Activated CD4-positive, alpha-beta memory T cell treated with anti-CD3 and anti-CD28 coated beads for 36 hours (primary cell): ENCODE measurements at regions of chrX and their contacts with region 1.

Region 1: DNA sequence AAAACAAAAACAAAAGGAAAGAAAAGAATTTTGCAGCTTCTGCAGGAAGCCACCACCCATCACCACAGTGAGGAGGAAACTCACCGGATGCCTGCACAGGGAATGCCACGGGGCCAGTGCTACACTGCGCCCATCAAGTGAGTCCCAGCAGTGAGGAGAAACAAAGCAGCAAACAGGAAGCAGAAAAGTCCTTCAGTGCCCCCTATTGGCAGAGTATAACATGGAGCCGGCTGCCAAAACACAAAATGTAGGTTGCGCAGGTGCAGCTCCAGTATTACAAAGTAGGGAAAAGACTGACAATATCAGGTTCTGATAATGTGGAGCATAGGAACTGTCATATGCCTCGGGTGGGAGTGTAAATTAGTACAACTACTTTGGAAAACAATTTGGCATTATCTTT is 23.3 kb upstream of the SCML2 start:
- DNase-seq: peak; percentile 30
- H3K4me3 Mint-ChIP-seq: no peak overlapping the region
- H3K27ac Mint-ChIP-seq: no peak overlapping the region
- H3K4me1 Mint-ChIP-seq: peaks cover 5% of the 10 kb centered on the region
- H3K27me3 Mint-ChIP-seq: peaks cover 2% of the 10 kb centered on the region

Region 2: GRCh38 chrX:17744896-17745523 is 632.8 kb before region 1 on chrX:
- CTCF ChIA-PET with region 1: interaction called, 4 read pairs
- POLR2A ChIA-PET with region 1: no interaction called
- intact Hi-C with region 1: loop called (anchors 10 kb)
- DNase-seq: no peak
- H3K4me3 Mint-ChIP-seq: no peak overlapping the region
- H3K27ac Mint-ChIP-seq: no peak overlapping the region
- H3K4me1 Mint-ChIP-seq: peaks cover 3% of the 10 kb centered on the region
- H3K27me3 Mint-ChIP-seq: peaks cover 4% of the 10 kb centered on the region

Region 3: DNA sequence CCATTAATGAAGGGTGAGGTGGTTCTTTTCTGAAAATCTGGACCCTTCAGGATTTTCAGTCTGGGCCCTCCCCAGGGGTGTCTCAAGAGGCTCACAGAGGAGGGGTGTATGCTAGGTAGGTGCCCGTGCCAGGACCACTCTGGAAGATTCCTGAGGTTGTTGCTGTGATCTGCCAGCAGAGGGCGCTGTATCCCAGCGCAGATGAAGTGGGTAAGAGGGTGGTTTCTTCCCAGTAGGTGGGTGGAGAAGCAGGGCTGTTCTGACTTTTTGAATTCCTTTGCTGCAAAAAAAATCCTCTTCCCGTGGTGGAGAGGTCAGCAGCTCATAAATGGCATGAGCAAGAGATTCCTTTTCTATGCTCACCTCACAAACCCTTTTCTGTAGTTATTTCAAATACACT is 589.4 kb before region 1 on chrX:
- CTCF ChIA-PET with region 1: interaction called, 5 read pairs
- POLR2A ChIA-PET with region 1: no interaction called
- intact Hi-C with region 1: loop called (anchors 2 kb)
- DNase-seq: peak; percentile 52
- H3K4me3 Mint-ChIP-seq: no peak overlapping the region
- H3K27ac Mint-ChIP-seq: no peak overlapping the region
- H3K4me1 Mint-ChIP-seq: no peaks in the 10 kb centered on the region
- H3K27me3 Mint-ChIP-seq: no peaks in the 10 kb centered on the region

Region 4: DNA sequence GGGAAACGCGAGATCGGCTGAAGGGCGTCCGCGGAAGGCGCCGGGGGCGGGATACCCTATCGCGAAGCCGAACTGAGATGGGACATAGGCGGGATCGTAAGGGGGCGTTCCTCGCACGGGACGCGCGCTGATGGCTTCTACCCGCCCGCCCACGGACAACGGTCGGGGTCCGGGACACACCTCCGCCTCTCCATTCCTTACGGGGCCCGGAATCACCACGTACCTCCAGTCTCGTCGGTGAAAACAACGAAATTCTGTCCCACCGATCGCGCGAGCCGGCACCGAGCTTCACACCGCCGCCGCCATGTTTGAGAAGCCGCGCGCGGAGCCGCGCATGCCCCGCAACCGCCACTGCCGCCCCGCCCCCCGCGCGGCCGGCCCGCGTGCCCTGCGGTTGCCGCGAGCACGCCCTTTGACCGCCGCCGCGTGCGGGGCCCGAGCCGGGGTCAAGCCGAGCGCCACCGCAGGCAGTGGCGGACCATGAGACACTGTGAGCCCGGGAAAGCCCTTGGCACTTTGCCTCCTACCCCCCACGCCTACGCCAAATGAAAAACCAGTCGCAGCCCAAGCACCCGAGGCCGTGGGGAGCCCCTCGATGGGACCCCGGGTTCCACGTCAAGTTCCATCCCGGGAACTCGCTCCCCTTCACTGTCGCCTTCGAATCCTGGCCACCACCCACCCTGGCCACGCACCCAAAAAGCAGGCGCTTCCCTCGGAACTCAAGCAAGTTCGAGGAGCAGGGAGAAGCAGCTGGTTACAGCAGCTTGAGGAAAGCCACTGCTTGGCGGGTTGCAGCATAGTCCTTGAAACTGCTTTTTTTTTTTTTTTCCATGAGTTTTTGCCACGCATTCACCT is 23.2 kb before region 1 on chrX and contains the start of gene SCML2:
- CTCF ChIA-PET with region 1: interaction called, 12 read pairs
- POLR2A ChIA-PET with region 1: interaction called, 7 read pairs
- intact Hi-C with region 1: no loop called
- DNase-seq: peak; percentile 40
- H3K4me3 Mint-ChIP-seq: peak within 1 kb of the TSS; percentile 71
- H3K27ac Mint-ChIP-seq: no peak within 1 kb of the TSS
- H3K4me1 Mint-ChIP-seq: peaks cover 2% of the 10 kb centered on the region
- H3K27me3 Mint-ChIP-seq: peaks cover 4% of the 10 kb centered on the region
- total RNA-seq, gene SCML2: 2.2 to 2.3 TPM

Region 5: GRCh38 chrX:18425199-18426003 is 47.6 kb after region 1 on chrX and contains the start of gene CDKL5:
- CTCF ChIA-PET with region 1: no interaction called
- POLR2A ChIA-PET with region 1: no interaction called
- intact Hi-C with region 1: no loop called
- DNase-seq: peak; percentile 97
- H3K4me3 Mint-ChIP-seq: peak within 1 kb of the TSS; percentile 77
- H3K27ac Mint-ChIP-seq: no peak within 1 kb of the TSS
- H3K4me1 Mint-ChIP-seq: peaks cover 9% of the 10 kb centered on the region
- H3K27me3 Mint-ChIP-seq: peaks cover 3% of the 10 kb centered on the region
- total RNA-seq, gene CDKL5: 1.2 to 1.4 TPM